Heart left ventricle (tissue), 16 donors: ENCODE measurements at regions of chr7 and their contacts with region 1.

Region 1: GRCh38 chr7:141014524-141015395 is at the start of gene MRPS33:
- DNase-seq: peak; percentile 95 to 98 (median 97)
- ATAC-seq: peak; percentile 99 to 100 (median 100)
- H3K4me3 ChIP-seq: peak within 1 kb of the TSS; percentile 47 to 87 (median 66)
- H3K27ac ChIP-seq: peak within 1 kb of the TSS; percentile 21 to 96 (median 90)
- H3K4me1 ChIP-seq: peaks cover 0 to 19% (median 12%) of the 10 kb centered on the region in 12 donors
- H3K27me3 ChIP-seq: peaks cover 0 to 5% (median 0%) of the 10 kb centered on the region in 9 donors
- CTCF ChIP-seq: peak in 10 of 12 donors; percentile 13 to 80 (median 52)
- POLR2A ChIP-seq: peak in 1 of 2 donors; percentile 64
- total RNA-seq, gene MRPS33: 43.7 to 137 (median 105) TPM

Region 2: GRCh38 chr7:140683657-140684056 is 331.1 kb before region 1 on chr7:
- intact Hi-C with region 1: loop called in 4 of 10 experiments (anchors 10 kb)
- DNase-seq: no peak
- ATAC-seq: no peak
- H3K4me3 ChIP-seq: no peak overlapping the region
- H3K27ac ChIP-seq: no peak overlapping the region
- H3K4me1 ChIP-seq: no peaks in the 10 kb centered on the region
- H3K27me3 ChIP-seq: no peaks in the 10 kb centered on the region
- CTCF ChIP-seq: no peak
- POLR2A ChIP-seq: no peak

Region 3: DNA sequence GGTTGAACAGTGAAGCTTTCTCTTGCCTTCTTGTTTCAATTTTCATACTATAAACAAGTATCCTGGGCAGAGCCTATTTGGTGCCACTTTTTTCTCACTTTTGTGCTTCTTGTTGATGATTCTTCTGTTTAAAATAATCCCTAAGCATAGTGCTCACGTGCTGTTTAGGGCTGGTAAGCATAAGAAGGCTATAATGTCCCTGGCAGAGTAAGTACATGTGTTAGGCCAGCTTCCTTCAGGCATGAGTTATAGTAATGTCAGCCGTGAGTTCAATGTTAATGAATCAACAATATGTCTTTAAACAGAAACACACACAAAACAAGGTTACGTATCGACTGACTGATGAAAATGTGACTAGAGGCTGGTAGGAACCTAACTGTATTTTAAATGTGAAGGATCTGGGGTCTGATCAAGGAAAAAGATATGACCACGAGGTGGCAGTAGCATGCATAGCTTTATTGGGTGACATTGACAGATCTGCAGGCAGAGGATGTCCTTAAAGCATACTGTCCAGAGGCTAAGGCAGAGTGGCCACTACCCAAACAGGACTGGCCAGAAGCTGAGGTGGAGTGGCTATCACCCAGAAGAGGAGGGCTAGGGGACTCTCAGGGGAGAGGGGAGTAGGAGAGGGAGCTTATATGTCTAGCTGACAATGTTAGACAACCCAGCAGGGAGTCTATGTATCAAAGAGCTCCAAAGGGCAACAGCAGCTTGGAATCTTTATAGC is 203.8 kb before region 1 on chr7:
- intact Hi-C with region 1: loop called (anchors 1 to 5 kb)
- DNase-seq: peak in 4 of 5 donors; percentile 34 to 59 (median 46)
- ATAC-seq: peak; percentile 71 to 94 (median 88)
- H3K4me3 ChIP-seq: no peak overlapping the region
- H3K27ac ChIP-seq: no peak overlapping the region
- H3K4me1 ChIP-seq: peaks cover 0 to 10% (median 2%) of the 10 kb centered on the region in 12 donors
- H3K27me3 ChIP-seq: no peaks in the 10 kb centered on the region
- CTCF ChIP-seq: peak; percentile 63 to 87 (median 74)
- POLR2A ChIP-seq: no peak

Region 4: GRCh38 chr7:140898786-140899536 is 115.8 kb before region 1 on chr7:
- intact Hi-C with region 1: no loop called
- DNase-seq: no peak
- ATAC-seq: no peak
- H3K4me3 ChIP-seq: no peak overlapping the region
- H3K27ac ChIP-seq: no peak overlapping the region
- H3K4me1 ChIP-seq: peaks cover 0 to 24% (median 9%) of the 10 kb centered on the region in 12 donors
- H3K27me3 ChIP-seq: no peaks in the 10 kb centered on the region
- CTCF ChIP-seq: no peak
- POLR2A ChIP-seq: no peak

Region 5: DNA sequence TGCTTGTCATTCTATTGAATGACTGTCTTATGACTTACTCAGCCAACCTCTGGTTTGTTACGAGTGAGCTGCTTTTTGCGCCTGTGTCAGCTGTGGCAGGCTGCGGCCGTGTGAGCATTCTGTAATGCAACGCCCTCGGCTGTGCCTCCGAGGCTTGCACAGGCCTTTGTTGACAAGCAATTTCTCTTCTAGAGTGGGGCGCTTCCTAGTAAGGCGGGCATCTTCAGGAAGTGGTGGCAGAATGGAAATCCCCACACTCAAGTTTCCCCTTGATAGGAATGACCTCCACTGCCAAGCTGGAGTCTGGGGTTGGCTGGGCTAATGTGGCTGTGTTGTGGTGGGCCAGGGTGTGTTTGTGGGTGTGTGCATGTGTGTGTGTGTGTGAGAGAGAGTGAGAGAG is 38.9 kb after region 1 on chr7:
- intact Hi-C with region 1: no loop called
- DNase-seq: no peak
- ATAC-seq: no peak
- H3K4me3 ChIP-seq: no peak overlapping the region
- H3K27ac ChIP-seq: no peak overlapping the region
- H3K4me1 ChIP-seq: no peaks in the 10 kb centered on the region
- H3K27me3 ChIP-seq: no peaks in the 10 kb centered on the region
- CTCF ChIP-seq: no peak
- POLR2A ChIP-seq: no peak

Region 6: GRCh38 chr7:141158613-141159012 is 143.9 kb after region 1 on chr7:
- intact Hi-C with region 1: no loop called
- DNase-seq: peak in 4 of 5 donors; percentile 25 to 62 (median 36)
- ATAC-seq: peak in 3 of 4 donors; percentile 59 to 89 (median 66)
- H3K4me3 ChIP-seq: no peak overlapping the region
- H3K27ac ChIP-seq: no peak overlapping the region
- H3K4me1 ChIP-seq: no peaks in the 10 kb centered on the region
- H3K27me3 ChIP-seq: no peaks in the 10 kb centered on the region
- CTCF ChIP-seq: no peak
- POLR2A ChIP-seq: no peak

Region 7: GRCh38 chr7:141220263-141220880 is 205.6 kb after region 1 on chr7:
- intact Hi-C with region 1: loop called in 1 of 10 experiments (anchors 10 kb)
- DNase-seq: no peak
- ATAC-seq: no peak
- H3K4me3 ChIP-seq: no peak overlapping the region
- H3K27ac ChIP-seq: no peak overlapping the region
- H3K4me1 ChIP-seq: no peaks in the 10 kb centered on the region
- H3K27me3 ChIP-seq: no peaks in the 10 kb centered on the region
- CTCF ChIP-seq: peak in 5 of 12 donors; percentile 12 to 34 (median 20)
- POLR2A ChIP-seq: no peak

Region 8: DNA sequence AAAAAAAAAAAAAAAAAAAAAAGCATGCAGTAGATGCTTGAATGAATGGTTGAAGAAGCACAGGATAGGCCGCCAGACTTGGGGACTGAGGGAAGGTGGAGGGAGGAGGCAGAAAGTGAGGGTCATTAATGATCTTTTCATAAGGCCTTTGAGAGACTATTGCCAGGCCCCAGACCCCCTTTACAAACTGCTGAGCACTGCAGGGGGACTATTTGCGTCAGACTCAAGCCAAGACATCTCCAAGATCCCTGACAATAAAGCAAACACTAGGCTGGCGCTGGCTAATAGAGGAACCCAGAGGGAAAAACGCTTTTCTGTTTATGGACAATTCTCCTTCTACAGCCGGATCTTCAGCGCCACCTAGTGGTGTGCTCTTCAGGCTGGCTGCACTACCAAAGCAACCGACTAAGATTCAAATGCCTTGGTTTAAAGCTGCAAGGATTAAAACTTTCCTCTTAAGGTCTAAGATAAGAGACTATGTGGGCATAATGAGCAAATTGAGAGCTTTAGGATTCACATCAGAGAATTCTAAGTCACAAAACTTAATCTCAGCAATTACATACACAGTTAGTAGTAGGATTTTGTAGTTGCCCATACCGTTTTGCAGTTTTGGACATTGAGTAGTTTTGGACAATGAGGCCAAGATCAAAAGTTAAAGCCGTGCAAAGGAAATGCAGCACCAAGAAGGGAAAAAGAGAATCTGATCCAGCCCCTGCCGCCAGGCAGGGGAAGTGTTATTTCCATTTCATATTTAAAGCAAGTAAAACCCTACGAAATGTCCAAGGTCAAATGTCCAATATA is 518.6 kb after region 1 on chr7:
- intact Hi-C with region 1: loop called in 3 of 10 experiments (anchors 5 to 10 kb)
- DNase-seq: peak; percentile 43 to 76 (median 60)
- ATAC-seq: peak; percentile 81 to 90 (median 84)
- H3K4me3 ChIP-seq: no peak overlapping the region
- H3K27ac ChIP-seq: peak overlapping the region in 3 of 12 donors; percentile 1 to 28 (median 2)
- H3K4me1 ChIP-seq: peaks cover 0 to 14% (median 1%) of the 10 kb centered on the region in 12 donors
- H3K27me3 ChIP-seq: peaks cover 0 to 7% (median 0%) of the 10 kb centered on the region in 9 donors
- CTCF ChIP-seq: peak; percentile 88 to 98 (median 95)
- POLR2A ChIP-seq: no peak